ENCODE measurements at regions of chr18 and their contacts with region 1.

Region 1: DNA sequence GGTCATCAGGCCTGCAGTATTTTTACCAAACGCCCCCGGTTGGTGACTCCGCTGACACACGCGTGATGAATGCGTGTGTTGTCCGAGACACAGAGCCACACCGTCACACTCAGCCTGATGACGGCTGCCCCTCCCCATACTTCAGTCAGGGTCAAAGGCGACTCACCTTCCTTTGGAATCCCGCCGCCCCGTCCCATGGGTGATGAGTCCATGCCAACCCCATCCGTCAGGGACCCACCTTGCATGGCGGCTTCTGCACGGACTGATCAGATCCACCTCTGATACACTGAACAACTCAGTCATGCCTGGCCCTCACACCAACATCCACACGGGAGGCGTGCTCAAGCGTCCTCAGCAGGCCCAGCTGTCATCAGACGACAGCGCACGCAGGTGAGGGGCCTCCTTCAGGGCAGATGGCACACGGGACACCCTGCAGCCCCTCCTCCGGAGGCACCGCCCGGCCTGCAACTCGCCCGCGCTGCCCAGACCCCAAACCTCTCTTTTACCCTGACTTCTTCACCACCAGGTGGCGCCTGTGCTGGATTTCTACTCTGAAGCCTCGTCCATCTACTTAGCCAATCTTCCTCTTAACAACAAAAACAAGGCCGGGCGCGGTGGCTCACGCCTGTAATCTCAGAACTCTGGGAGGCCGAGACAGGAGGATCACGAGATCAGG is 89.2 kb downstream of the ZNF516 start:
- DNase-seq: peak; percentile 52
- H3K4me3 ChIP-seq: no peak overlapping the region
- H3K27ac ChIP-seq: no peak overlapping the region
- H3K4me1 ChIP-seq: no peaks in the 10 kb centered on the region
- H3K27me3 ChIP-seq: no peaks in the 10 kb centered on the region
- CTCF ChIP-seq: peak; percentile 51 to 73 (median 56)
- EP300 ChIP-seq: no peak
- POLR2A ChIP-seq: no peak

Region 2: DNA sequence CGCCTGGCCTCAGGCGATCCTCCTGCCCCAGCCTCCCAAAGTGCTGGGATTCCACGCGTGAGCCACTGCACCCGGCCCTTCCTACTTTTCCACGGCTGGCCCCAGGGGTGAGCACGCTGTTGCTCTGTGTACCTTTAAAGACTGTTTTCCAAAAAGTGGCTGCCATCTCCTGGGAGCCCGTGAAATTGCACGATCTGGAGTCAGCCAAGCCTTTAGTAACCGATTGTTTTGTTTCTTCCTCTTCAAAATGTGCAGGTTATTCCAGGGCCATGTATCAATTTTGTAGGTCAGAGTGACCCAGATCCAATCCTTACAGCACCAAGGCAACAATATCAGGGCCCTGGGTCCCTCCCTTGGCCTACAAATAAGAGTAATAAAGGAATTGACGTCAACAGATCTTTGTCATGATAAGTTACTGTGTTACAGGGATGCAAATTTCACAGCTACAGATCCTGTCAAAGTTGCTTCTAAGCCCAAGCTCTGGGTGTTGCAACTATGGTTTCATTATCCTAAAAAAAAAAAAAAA is 281.0 kb after region 1 on chr18:
- in situ Hi-C with region 1: loop called in 1 of 4 experiments (anchors 10 kb)
- intact Hi-C with region 1: no loop called
- DNase-seq: peak; percentile 52
- H3K4me3 ChIP-seq: no peak overlapping the region
- H3K27ac ChIP-seq: peak overlapping the region in 3 of 4 donors; percentile 21 to 41 (median 41)
- H3K4me1 ChIP-seq: peaks cover 0 to 8% (median 0%) of the 10 kb centered on the region in 4 donors
- H3K27me3 ChIP-seq: peaks cover 14% of the 10 kb centered on the region
- CTCF ChIP-seq: peak; percentile 51 to 58 (median 56)
- EP300 ChIP-seq: no peak
- POLR2A ChIP-seq: no peak

Region 3: DNA sequence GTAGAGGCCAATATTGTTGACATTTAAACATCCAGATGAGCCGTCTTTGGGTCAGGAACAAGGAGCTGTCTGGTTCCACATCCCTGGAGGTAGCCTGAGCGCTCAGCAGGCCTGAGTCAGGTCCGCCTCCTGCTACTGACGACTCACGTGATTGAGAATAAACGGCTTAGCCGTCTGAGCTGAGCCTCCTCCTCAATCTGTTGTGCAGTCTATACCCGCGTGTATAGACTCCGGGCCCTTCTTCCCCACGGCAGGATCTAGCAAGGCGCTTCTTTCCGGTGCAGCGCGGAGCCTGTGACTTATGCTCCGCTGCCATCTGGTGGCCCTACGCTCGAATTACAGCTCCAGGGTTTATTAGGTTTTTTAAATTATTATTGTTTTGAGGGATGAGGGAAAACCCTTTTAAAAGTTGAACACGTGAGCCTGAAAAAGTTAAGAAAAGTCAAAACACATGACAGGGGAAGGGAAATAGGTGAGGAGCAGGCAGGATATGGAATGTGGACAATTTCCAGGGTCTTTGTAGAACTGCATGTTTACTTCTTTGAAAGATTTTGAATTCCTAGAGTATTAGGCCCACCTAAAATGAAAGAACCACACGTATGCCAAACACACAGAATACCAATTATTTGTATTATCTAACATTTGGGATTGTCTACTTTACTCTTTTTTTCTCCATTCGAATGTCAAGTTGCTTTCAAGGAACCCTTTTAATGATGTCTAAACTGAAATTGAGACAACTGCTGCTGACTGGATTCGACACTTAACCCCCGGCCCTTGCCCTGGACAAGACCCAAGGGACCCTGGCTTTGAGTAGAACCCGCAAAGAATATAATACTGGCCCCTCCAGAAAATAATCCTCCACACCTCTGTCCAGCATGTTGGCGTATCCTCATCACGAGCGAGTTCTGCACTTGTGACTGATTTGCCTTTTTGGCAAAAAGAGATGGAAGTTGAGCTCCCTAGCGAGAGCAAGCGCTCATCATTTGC is 304.1 kb after region 1 on chr18:
- in situ Hi-C with region 1: loop called in 2 of 4 experiments (anchors 10 kb)
- intact Hi-C with region 1: no loop called
- DNase-seq: peak; percentile 61
- H3K4me3 ChIP-seq: no peak overlapping the region
- H3K27ac ChIP-seq: no peak overlapping the region
- H3K4me1 ChIP-seq: peaks cover 0 to 6% (median 0%) of the 10 kb centered on the region in 4 donors
- H3K27me3 ChIP-seq: no peaks in the 10 kb centered on the region
- CTCF ChIP-seq: peak; percentile 87 to 96 (median 89)
- EP300 ChIP-seq: no peak
- POLR2A ChIP-seq: no peak

Measured in transverse colon (tissue), 4 donors.